HCT116 (cell line): ENCODE measurements at regions of chr3 and their contacts with region 1.

Region 1: DNA sequence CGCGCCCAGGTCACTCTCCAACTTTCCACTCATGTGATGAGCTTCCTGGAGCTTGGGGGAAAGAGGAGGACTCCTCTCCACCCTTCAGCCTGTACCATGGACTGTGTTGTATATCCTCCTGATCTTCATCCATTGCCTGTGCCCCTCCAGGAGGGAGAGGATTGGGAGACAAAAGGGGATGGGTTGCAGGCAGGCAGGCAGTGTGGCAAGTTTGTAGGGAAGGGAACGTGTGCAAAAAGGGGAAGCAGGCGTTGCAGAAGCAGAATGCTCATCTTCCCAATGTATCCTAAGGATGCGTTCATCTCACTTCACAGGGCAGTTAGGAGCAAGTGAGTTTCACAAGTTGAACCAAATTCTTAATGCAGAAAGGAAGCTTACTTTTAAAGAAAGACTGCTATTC is 28.1 kb upstream of the GHSR start:
- DNase-seq: no peak
- ATAC-seq: no peak
- H3K4me3 ChIP-seq: peak overlapping the region in 1 of 2 experiments; percentile 67; a peak in 1 of 4 replicates
- H3K27ac ChIP-seq: no peak overlapping the region
- H3K4me1 ChIP-seq: peaks cover 6 to 14% of the 10 kb centered on the region in 2 experiments; a peak in 3 of 4 replicates
- H3K27me3 ChIP-seq: no peaks in the 10 kb centered on the region
- CTCF ChIP-seq: no peak
- POLR2A ChIP-seq: no peak
- RAD21 ChIP-seq: no peak

Region 2: GRCh38 chr3:172359219-172359618 is 117.1 kb before region 1 on chr3:
- CTCF ChIA-PET with region 1: no interaction called
- POLR2A ChIA-PET with region 1: no interaction called
- RAD21 ChIA-PET with region 1: no interaction called
- intact Hi-C with region 1: loop called (anchors 1 kb)
- DNase-seq: no peak
- ATAC-seq: no peak
- H3K4me3 ChIP-seq: no peak overlapping the region
- H3K27ac ChIP-seq: no peak overlapping the region
- H3K4me1 ChIP-seq: peaks cover 9 to 14% of the 10 kb centered on the region in 2 experiments
- H3K27me3 ChIP-seq: no peaks in the 10 kb centered on the region
- CTCF ChIP-seq: peak; percentile 5 to 21 (median 18); a peak in 2 of 6 replicates
- POLR2A ChIP-seq: no peak
- RAD21 ChIP-seq: peak; percentile 35; the same call in 1 of the 2 replicates

Region 3: DNA sequence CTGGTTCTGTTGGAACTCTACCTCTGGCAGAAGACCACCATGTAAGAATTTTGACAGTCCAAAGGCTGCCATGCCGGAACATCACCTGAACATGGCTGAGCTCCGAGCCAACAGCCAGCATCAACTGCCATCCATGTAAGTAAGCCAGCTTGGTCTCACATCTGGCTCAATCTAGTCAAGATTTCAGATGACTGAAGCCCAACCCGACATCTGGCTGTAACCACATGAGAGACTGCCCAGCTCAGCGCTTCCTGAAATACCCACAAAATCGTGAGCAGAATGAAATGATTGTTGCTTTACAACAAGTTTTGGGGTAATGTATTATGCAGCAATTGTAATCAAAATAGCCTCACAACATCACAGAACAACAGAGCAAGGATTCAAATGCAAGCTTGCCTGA is 61.0 kb before region 1 on chr3:
- CTCF ChIA-PET with region 1: no interaction called
- POLR2A ChIA-PET with region 1: no interaction called
- RAD21 ChIA-PET with region 1: no interaction called
- intact Hi-C with region 1: no loop called
- DNase-seq: no peak
- ATAC-seq: no peak
- H3K4me3 ChIP-seq: no peak overlapping the region
- H3K27ac ChIP-seq: no peak overlapping the region
- H3K4me1 ChIP-seq: no peaks in the 10 kb centered on the region
- H3K27me3 ChIP-seq: no peaks in the 10 kb centered on the region
- CTCF ChIP-seq: no peak
- POLR2A ChIP-seq: no peak
- RAD21 ChIP-seq: no peak

Region 4: GRCh38 chr3:172461530-172462138 is 14.7 kb before region 1 on chr3:
- CTCF ChIA-PET with region 1: interaction called, 18 read pairs
- POLR2A ChIA-PET with region 1: no interaction called
- RAD21 ChIA-PET with region 1: interaction called in 1 of 2 experiments, 3 read pairs
- intact Hi-C with region 1: no loop called
- DNase-seq: no peak
- ATAC-seq: peak; percentile 79
- H3K4me3 ChIP-seq: no peak overlapping the region
- H3K27ac ChIP-seq: no peak overlapping the region
- H3K4me1 ChIP-seq: peaks cover 14 to 23% of the 10 kb centered on the region in 2 experiments; a peak in 3 of 4 replicates
- H3K27me3 ChIP-seq: no peaks in the 10 kb centered on the region
- CTCF ChIP-seq: peak; percentile 49 to 92 (median 91); a peak in 5 of 6 replicates
- POLR2A ChIP-seq: no peak
- RAD21 ChIP-seq: peak; percentile 54

Region 5: GRCh38 chr3:172750368-172751174 is 274.2 kb after region 1 on chr3 and contains the start of gene ECT2:
- CTCF ChIA-PET with region 1: no interaction called
- POLR2A ChIA-PET with region 1: no interaction called
- RAD21 ChIA-PET with region 1: no interaction called
- intact Hi-C with region 1: no loop called
- DNase-seq: peak; percentile 100
- ATAC-seq: peak; percentile 96
- H3K4me3 ChIP-seq: peak within 1 kb of the TSS; percentile 83 to 92
- H3K27ac ChIP-seq: peak within 1 kb of the TSS; percentile 71
- H3K4me1 ChIP-seq: peaks cover 21 to 49% of the 10 kb centered on the region in 2 experiments
- H3K27me3 ChIP-seq: no peaks in the 10 kb centered on the region
- CTCF ChIP-seq: peak; percentile 46 to 64 (median 62); a peak in 5 of 6 replicates
- POLR2A ChIP-seq: no peak
- RAD21 ChIP-seq: peak; percentile 52
- total RNA-seq, gene ECT2: 95.6 TPM